Heart left ventricle (tissue), 16 donors: ENCODE measurements at regions of chr10 and their contacts with region 1.

Region 1: GRCh38 chr10:68348265-68348741 is 15.6 kb upstream of the PBLD start:
- DNase-seq: no peak
- ATAC-seq: peak in 2 of 4 donors; percentile 45 to 56
- H3K4me3 ChIP-seq: no peak overlapping the region
- H3K27ac ChIP-seq: no peak overlapping the region
- H3K4me1 ChIP-seq: no peaks in the 10 kb centered on the region
- H3K27me3 ChIP-seq: no peaks in the 10 kb centered on the region
- CTCF ChIP-seq: peak; percentile 41 to 69 (median 52)
- POLR2A ChIP-seq: no peak

Region 2: DNA sequence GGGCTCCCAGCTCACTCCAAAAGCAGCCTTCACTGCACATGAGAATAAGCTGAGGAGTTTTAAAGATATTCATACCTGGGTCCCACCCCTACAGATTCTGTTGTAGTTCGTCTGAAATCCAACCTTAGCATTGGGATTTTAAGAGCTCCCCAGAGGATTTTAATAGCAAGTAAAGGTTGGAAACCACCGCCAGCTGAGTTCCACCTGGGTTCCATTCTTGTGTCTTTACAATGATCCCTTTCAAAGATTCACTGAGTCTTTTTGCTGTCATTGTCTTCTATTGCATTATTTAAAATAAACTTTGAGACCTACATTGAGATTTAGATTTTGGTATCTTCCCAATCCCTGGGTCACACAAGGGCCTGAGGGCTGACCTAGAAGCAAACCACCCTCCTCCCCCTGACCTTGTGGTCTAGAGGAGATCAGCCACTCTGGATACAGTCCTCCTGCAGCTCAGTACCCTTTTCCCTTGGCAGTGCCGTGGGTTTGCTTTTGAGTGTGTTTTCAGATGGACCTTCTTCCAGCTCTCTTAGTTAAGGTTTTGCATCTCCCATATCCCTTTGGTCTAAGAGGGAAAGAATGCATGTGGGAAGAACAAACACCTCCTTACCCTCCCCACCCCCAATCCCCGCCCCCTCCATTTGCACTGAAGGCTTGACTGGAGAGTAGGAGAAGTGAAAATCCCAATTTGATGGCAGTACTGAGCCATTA is 486.4 kb before region 1 on chr10:
- intact Hi-C with region 1: no loop called
- DNase-seq: no peak
- ATAC-seq: no peak
- H3K4me3 ChIP-seq: no peak overlapping the region
- H3K27ac ChIP-seq: no peak overlapping the region
- H3K4me1 ChIP-seq: peaks cover 0 to 5% (median 0%) of the 10 kb centered on the region in 12 donors
- H3K27me3 ChIP-seq: no peaks in the 10 kb centered on the region
- CTCF ChIP-seq: no peak
- POLR2A ChIP-seq: no peak

Region 3: DNA sequence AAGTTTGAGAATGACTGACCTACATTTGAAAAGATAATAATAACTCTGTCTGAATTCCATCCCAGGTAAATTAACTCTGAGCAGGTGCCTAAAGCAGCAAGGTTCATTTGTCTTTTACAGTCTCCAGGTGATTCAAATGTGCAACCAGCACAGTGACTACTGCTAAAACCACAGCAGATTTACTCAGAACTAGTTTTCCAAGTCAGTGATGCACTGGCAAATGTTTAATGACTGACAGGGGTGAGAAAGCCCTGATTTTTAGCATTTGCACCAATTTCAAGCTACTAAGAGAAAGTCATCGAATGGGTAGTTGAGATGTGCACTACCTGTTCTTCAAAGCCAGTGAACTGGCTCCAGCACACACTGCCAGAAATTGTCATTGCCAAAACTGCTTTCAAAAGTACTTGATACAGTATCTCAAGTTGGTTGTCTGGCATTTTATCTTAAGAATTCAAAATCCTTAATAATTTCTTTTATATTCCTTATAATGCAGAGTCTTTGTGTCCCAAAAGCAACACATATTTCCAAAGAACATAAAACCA is 176.7 kb before region 1 on chr10:
- intact Hi-C with region 1: no loop called
- DNase-seq: no peak
- ATAC-seq: no peak
- H3K4me3 ChIP-seq: no peak overlapping the region
- H3K27ac ChIP-seq: no peak overlapping the region
- H3K4me1 ChIP-seq: no peaks in the 10 kb centered on the region
- H3K27me3 ChIP-seq: no peaks in the 10 kb centered on the region
- CTCF ChIP-seq: no peak
- POLR2A ChIP-seq: no peak

Region 4: DNA sequence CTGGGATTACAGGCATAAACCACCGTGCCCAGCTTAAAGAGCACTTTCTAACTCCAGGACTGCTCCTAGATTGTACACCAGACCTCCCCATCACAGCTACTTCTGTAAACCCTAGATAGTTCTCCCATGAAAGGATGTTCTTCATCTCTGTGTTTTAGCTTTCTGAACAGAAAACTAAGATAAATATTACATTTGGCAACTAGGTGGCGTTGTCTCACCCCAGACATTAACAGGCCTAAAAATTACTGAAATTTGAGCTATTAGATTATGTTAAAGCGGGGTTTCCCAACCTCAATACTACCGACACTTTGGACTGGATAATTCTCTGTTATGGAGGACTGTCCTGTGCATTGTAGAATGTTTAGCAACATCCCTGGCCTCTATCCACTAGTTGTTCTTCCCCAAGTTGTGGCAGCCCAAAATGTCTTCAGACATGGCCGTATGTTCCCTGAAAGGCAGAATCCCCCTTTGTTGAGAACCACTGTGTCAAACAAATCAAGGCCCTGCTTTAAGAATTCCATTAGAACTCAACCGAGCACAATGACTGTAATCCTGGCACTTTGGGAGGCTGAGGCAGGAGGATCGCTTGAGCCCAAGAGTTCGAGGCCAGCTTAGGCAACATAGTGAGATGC is 135.5 kb before region 1 on chr10:
- intact Hi-C with region 1: loop called in 1 of 10 experiments (anchors 5 kb)
- DNase-seq: no peak
- ATAC-seq: no peak
- H3K4me3 ChIP-seq: no peak overlapping the region
- H3K27ac ChIP-seq: no peak overlapping the region
- H3K4me1 ChIP-seq: no peaks in the 10 kb centered on the region
- H3K27me3 ChIP-seq: no peaks in the 10 kb centered on the region
- CTCF ChIP-seq: peak; percentile 34 to 64 (median 50)
- POLR2A ChIP-seq: no peak

Region 5: GRCh38 chr10:68397005-68397404 is 48.7 kb after region 1 on chr10:
- intact Hi-C with region 1: loop called in 3 of 10 experiments (anchors 5 to 10 kb)
- DNase-seq: no peak
- ATAC-seq: no peak
- H3K4me3 ChIP-seq: no peak overlapping the region
- H3K27ac ChIP-seq: no peak overlapping the region
- H3K4me1 ChIP-seq: no peaks in the 10 kb centered on the region
- H3K27me3 ChIP-seq: no peaks in the 10 kb centered on the region
- CTCF ChIP-seq: no peak
- POLR2A ChIP-seq: no peak

Region 6: GRCh38 chr10:68406815-68407548 is 58.7 kb after region 1 on chr10 and contains the start of gene RUFY2:
- intact Hi-C with region 1: loop called in 1 of 10 experiments (anchors 5 kb)
- DNase-seq: peak; percentile 79 to 91 (median 82)
- ATAC-seq: peak; percentile 79 to 98 (median 96)
- H3K4me3 ChIP-seq: peak within 1 kb of the TSS; percentile 69 to 100 (median 96)
- H3K27ac ChIP-seq: peak within 1 kb of the TSS; percentile 86 to 96 (median 93)
- H3K4me1 ChIP-seq: peaks cover 0 to 30% (median 6%) of the 10 kb centered on the region in 12 donors
- H3K27me3 ChIP-seq: no peaks in the 10 kb centered on the region
- CTCF ChIP-seq: peak in 11 of 12 donors; percentile 21 to 100 (median 80)
- POLR2A ChIP-seq: peak in 1 of 2 donors; percentile 61
- total RNA-seq, gene RUFY2: 5.6 to 11.8 (median 8.9) TPM